Endothelial cell of umbilical vein (primary cell): ENCODE measurements at regions of chr6 and their contacts with region 1.

Region 1: GRCh38 chr6:130293800-130294199 is 71.0 kb upstream of the SAMD3 start:
- DNase-seq: peak; percentile 51
- H3K4me3 ChIP-seq: no peak overlapping the region
- H3K27ac ChIP-seq: no peak overlapping the region
- H3K4me1 ChIP-seq: no peaks in the 10 kb centered on the region
- H3K27me3 ChIP-seq: peaks cover 0 to 3% of the 10 kb centered on the region in 2 experiments
- CTCF ChIP-seq: peak; percentile 38 to 63
- POLR2A ChIP-seq: no peak

Region 2: DNA sequence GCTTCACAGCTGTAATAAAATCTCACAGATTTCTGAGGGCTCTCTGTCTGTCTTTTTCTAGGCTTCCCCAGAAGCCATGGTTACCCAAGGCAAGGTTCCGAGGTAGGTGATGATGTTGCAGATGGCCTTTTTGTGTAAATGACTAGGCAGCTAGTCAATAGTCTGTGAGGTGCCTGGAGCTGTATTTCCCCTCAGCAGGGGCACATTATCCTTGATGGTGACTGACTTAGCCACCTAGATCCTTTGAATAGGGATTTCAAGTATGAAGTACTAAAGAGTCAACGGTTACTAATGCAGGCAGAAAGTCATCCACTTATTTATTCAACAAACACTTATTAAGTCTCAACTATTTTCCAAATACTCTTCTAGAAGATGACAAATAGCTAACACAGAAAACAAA is 324.7 kb before region 1 on chr6:
- CTCF ChIA-PET with region 1: no interaction called
- POLR2A ChIA-PET with region 1: no interaction called
- dilution Hi-C with region 1: no loop called
- intact Hi-C with region 1: no loop called
- DNase-seq: no peak
- H3K4me3 ChIP-seq: no peak overlapping the region
- H3K27ac ChIP-seq: no peak overlapping the region
- H3K4me1 ChIP-seq: no peaks in the 10 kb centered on the region
- H3K27me3 ChIP-seq: peaks cover 4 to 19% of the 10 kb centered on the region in 2 experiments
- CTCF ChIP-seq: no peak
- POLR2A ChIP-seq: no peak

Region 3: GRCh38 chr6:130307752-130308361 is 14.1 kb after region 1 on chr6:
- CTCF ChIA-PET with region 1: interaction called, 15 read pairs
- POLR2A ChIA-PET with region 1: no interaction called
- dilution Hi-C with region 1: no loop called
- intact Hi-C with region 1: no loop called
- DNase-seq: no peak
- H3K4me3 ChIP-seq: no peak overlapping the region
- H3K27ac ChIP-seq: no peak overlapping the region
- H3K4me1 ChIP-seq: no peaks in the 10 kb centered on the region
- H3K27me3 ChIP-seq: no peaks in the 10 kb centered on the region
- CTCF ChIP-seq: no peak
- POLR2A ChIP-seq: no peak

Region 4: DNA sequence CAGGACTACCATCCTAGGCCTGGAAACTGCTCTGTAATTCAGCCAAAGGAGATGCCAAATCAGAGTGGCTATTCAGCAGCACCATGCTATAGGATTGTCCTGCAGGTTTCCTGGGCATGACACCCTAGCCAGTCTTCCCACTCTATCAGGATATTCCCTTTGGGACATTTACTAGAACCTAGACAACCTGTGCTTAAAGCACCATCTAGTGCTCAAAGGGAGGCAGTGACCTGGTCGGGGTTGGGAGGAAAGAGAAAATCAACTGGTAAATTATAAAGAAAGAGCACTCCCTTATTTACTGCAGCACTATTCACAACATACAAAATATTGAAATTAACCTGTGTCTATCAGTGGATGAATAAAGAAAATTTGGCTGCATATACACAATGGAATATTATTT is 466.2 kb after region 1 on chr6:
- CTCF ChIA-PET with region 1: interaction called, 21 read pairs
- POLR2A ChIA-PET with region 1: no interaction called
- dilution Hi-C with region 1: no loop called
- intact Hi-C with region 1: loop called (anchors 1 kb)
- DNase-seq: peak; percentile 47
- H3K4me3 ChIP-seq: no peak overlapping the region
- H3K27ac ChIP-seq: no peak overlapping the region
- H3K4me1 ChIP-seq: no peaks in the 10 kb centered on the region
- H3K27me3 ChIP-seq: peaks cover 0 to 10% of the 10 kb centered on the region in 2 experiments
- CTCF ChIP-seq: peak; percentile 56 to 72
- POLR2A ChIP-seq: no peak

Region 5: DNA sequence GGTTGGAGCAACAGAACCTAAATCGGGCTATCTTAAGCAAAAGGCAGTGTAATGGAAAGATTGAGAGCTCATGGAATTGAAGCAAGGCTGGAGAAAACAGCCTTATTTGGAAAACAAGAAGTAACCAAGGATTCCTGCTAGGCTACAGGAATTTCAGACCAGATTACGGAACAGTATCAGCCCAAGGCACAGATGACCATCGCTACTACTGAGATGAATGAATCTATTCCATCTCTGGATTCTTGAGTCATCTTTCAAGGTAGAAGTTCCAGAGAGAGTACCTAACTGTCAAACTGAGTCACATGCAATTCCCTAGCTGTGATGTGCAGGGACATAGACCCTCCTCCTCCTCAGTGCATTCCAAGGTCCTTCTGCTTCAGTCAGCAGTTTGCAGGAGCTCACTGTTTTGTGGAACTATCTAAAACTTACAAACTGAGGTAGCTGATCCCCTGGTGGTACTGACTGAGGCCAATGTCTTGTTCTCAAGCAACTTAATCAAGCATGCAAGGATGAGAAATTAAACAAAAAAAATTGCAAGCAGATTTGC is 471.5 kb after region 1 on chr6:
- CTCF ChIA-PET with region 1: interaction called, 15 read pairs
- POLR2A ChIA-PET with region 1: no interaction called
- dilution Hi-C with region 1: no loop called
- intact Hi-C with region 1: loop called (anchors 1 kb)
- DNase-seq: no peak
- H3K4me3 ChIP-seq: no peak overlapping the region
- H3K27ac ChIP-seq: no peak overlapping the region
- H3K4me1 ChIP-seq: no peaks in the 10 kb centered on the region
- H3K27me3 ChIP-seq: peaks cover 7 to 14% of the 10 kb centered on the region in 2 experiments
- CTCF ChIP-seq: no peak
- POLR2A ChIP-seq: no peak

Region 6: GRCh38 chr6:130843575-130844320 is 549.9 kb after region 1 on chr6:
- CTCF ChIA-PET with region 1: interaction called, 15 read pairs
- POLR2A ChIA-PET with region 1: no interaction called
- dilution Hi-C with region 1: no loop called
- intact Hi-C with region 1: no loop called
- DNase-seq: peak; percentile 64
- H3K4me3 ChIP-seq: no peak overlapping the region
- H3K27ac ChIP-seq: no peak overlapping the region
- H3K4me1 ChIP-seq: no peaks in the 10 kb centered on the region
- H3K27me3 ChIP-seq: no peaks in the 10 kb centered on the region
- CTCF ChIP-seq: peak; percentile 34 to 35
- POLR2A ChIP-seq: no peak